ENCODE measurements at regions of chr1 and their contacts with region 1.

Region 1: DNA sequence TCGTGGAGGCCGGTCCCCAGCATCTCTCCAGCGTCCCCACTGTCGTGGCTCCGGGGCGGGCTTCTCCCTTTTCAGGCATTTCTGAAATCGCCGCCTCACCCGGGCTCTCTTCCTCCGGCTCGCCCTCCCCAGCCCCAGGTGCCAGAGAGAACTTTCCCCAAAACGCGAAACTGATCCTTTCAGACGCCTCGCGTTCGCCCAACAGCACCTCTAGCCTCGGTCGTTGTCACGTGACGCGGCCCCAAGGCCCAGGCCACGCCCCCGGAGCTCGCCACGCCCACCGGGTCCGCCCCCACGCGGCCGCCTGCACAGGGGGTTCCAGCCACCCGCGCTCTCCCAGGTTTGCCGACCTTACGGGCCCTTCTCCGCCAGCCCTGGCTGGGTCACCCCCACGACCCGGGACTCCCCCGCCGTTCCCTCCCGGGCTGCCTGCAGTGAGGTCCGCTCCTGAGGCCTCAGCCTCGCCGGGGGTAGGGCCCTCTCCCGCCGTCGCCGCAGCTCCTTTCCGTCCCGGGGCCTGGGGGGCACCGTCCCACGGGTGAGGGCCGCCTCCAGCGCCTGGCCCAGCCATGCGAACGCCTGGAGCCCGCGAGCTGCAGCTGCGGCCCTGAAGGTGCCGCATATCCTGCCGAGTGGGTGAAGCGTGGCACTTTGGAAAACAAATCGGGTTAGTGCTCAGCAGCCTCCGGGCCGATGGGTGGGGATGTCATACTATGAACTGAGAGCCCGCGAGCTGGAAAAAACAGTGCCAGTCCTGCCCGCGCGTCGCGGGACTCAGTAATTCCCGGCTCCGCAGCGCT is 21.0 kb downstream of the H3-3A start:
- DNase-seq: peak; percentile 60
- ATAC-seq: peak; percentile 97
- H3K4me3 ChIP-seq: peak overlapping the region; percentile 66
- H3K27ac ChIP-seq: peak overlapping the region; percentile 53
- H3K4me1 ChIP-seq: no peaks in the 10 kb centered on the region
- H3K27me3 ChIP-seq: no peaks in the 10 kb centered on the region
- CTCF ChIP-seq: no peak
- POLR2A ChIP-seq: no peak
- RAD21 ChIP-seq: no peak

Region 2: DNA sequence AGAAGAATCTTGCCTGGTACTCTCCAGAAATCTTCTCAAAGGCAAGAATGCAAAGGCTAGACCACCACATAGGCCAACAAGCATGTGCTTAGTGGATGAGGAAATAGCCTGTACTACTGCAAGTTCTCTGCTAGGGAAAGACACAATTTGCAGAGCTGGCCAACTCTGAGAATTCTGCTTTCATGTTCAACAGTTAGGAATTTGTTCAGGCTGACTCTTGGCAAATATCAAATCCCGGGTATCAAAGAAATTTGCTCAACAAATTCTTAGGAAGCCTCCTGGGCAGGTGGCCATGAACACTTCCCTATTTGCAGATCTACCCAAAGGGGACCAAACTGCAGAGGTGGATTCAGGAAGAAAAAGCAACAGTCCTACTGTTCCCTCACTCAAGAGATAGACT is 36.0 kb before region 1 on chr1:
- CTCF ChIA-PET with region 1: no interaction called
- POLR2A ChIA-PET with region 1: interaction called, 22 read pairs
- dilution Hi-C with region 1: no loop called
- in situ Hi-C with region 1: no loop called
- intact Hi-C with region 1: no loop called
- DNase-seq: peak; percentile 61
- ATAC-seq: peak; percentile 51; the same call in 1 of the 2 replicates
- H3K4me3 ChIP-seq: no peak overlapping the region
- H3K27ac ChIP-seq: no peak overlapping the region
- H3K4me1 ChIP-seq: no peaks in the 10 kb centered on the region
- H3K27me3 ChIP-seq: no peaks in the 10 kb centered on the region
- CTCF ChIP-seq: no peak
- POLR2A ChIP-seq: no peak
- RAD21 ChIP-seq: no peak

Measured in IMR-90 (cell line).